Transverse colon (tissue), 4 donors: ENCODE measurements at regions of chr17 and their contacts with region 1.

Region 1: DNA sequence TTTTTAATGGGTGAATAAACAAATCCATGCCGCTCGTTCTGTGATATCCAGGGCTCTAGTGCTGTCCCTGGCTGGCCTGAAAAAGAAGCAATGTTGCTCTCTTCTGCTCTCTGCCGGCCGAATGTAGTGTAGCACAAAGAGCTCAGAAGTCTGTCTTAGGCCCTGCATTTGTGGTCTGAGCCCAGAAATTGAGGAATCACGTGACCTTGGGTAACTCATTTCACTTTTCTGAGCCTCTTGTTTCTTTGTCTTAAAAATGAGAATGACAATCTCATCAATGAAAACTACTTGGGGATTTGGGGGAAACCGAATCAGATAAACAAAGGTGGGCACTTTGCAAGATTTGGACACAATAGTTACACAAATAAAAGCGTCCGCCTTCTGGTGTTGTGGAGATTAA is 381.6 kb upstream of the ASIC2 start:
- DNase-seq: peak; percentile 46
- H3K4me3 ChIP-seq: no peak overlapping the region
- H3K27ac ChIP-seq: no peak overlapping the region
- H3K4me1 ChIP-seq: no peaks in the 10 kb centered on the region
- H3K27me3 ChIP-seq: no peaks in the 10 kb centered on the region
- CTCF ChIP-seq: peak; percentile 57 to 70 (median 59)
- EP300 ChIP-seq: no peak
- POLR2A ChIP-seq: no peak

Region 2: GRCh38 chr17:33049781-33050414 is 624.8 kb before region 1 on chr17:
- in situ Hi-C with region 1: loop called in 2 of 4 experiments (anchors 25 kb)
- intact Hi-C with region 1: no loop called
- DNase-seq: peak; percentile 60
- H3K4me3 ChIP-seq: no peak overlapping the region
- H3K27ac ChIP-seq: no peak overlapping the region
- H3K4me1 ChIP-seq: no peaks in the 10 kb centered on the region
- H3K27me3 ChIP-seq: peaks cover 10% of the 10 kb centered on the region
- CTCF ChIP-seq: peak; percentile 54 to 90 (median 71)
- EP300 ChIP-seq: no peak
- POLR2A ChIP-seq: no peak

Region 3: GRCh38 chr17:33459078-33459940 is 215.4 kb before region 1 on chr17:
- in situ Hi-C with region 1: no loop called
- intact Hi-C with region 1: no loop called
- DNase-seq: no peak
- H3K4me3 ChIP-seq: no peak overlapping the region
- H3K27ac ChIP-seq: no peak overlapping the region
- H3K4me1 ChIP-seq: no peaks in the 10 kb centered on the region
- H3K27me3 ChIP-seq: no peaks in the 10 kb centered on the region
- CTCF ChIP-seq: no peak
- EP300 ChIP-seq: no peak
- POLR2A ChIP-seq: no peak

Region 4: GRCh38 chr17:34118564-34118963 is 443.9 kb after region 1 on chr17:
- in situ Hi-C with region 1: no loop called
- intact Hi-C with region 1: no loop called
- DNase-seq: no peak
- H3K4me3 ChIP-seq: no peak overlapping the region
- H3K27ac ChIP-seq: no peak overlapping the region
- H3K4me1 ChIP-seq: no peaks in the 10 kb centered on the region
- H3K27me3 ChIP-seq: peaks cover 6% of the 10 kb centered on the region
- CTCF ChIP-seq: no peak
- EP300 ChIP-seq: no peak
- POLR2A ChIP-seq: no peak

Region 5: GRCh38 chr17:34207572-34207971 is 532.9 kb after region 1 on chr17:
- in situ Hi-C with region 1: no loop called
- intact Hi-C with region 1: no loop called
- DNase-seq: no peak
- H3K4me3 ChIP-seq: no peak overlapping the region
- H3K27ac ChIP-seq: no peak overlapping the region
- H3K4me1 ChIP-seq: no peaks in the 10 kb centered on the region
- H3K27me3 ChIP-seq: no peaks in the 10 kb centered on the region
- CTCF ChIP-seq: no peak
- EP300 ChIP-seq: no peak
- POLR2A ChIP-seq: no peak